HCT116 (cell line): ENCODE measurements at regions of chr16 and their contacts with region 1.

Region 1: DNA sequence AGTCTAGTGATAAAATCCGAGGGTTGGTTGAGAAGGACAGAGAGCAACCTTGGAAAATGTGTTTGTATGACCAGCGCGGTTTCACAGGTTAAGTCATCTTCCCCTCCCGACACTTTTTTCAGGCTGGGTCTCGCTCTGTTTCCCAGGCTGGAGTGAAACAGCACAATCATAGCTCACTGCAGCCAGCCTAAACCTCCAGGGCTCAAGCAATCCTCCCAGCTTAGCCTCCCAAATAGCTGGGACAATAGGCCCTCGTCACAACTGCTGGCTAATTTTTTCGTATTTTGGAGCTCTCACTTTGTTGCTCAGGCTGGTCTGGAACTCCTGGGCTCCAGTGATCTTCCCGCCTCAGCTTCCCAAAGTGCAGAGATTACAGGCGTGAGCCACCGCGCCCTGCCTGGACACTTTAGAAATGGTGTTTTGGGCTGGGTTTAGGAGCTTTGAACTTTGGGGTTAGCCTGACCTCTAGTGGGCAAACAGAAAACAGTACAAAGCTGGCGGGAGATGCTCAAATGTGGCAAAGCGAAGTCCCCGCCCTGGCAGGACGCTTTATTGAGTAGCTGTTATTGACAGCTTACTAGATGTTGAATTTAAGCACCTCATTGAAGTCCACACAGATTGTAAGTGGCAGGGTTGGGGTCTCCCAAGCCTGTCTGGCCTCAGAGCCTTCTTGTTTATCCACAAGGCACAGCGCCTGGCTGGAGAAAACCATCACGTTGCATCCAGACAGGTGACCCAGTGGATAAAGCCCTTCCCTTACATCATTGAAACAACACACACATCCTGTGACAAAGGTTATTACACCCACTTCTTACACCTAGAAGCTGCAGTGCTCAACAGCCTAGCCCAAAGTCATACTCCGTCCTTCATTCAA is 34.7 kb upstream of the RBBP6 start:
- DNase-seq: peak; percentile 74
- ATAC-seq: peak; percentile 98
- H3K4me3 ChIP-seq: no peak overlapping the region; a peak in 2 of 4 replicates
- H3K27ac ChIP-seq: no peak overlapping the region
- H3K4me1 ChIP-seq: peaks cover 0 to 9% of the 10 kb centered on the region in 2 experiments; a peak in 3 of 4 replicates
- H3K27me3 ChIP-seq: no peaks in the 10 kb centered on the region
- CTCF ChIP-seq: peak; percentile 76 to 82 (median 81)
- POLR2A ChIP-seq: no peak
- RAD21 ChIP-seq: peak; percentile 86

Region 2: DNA sequence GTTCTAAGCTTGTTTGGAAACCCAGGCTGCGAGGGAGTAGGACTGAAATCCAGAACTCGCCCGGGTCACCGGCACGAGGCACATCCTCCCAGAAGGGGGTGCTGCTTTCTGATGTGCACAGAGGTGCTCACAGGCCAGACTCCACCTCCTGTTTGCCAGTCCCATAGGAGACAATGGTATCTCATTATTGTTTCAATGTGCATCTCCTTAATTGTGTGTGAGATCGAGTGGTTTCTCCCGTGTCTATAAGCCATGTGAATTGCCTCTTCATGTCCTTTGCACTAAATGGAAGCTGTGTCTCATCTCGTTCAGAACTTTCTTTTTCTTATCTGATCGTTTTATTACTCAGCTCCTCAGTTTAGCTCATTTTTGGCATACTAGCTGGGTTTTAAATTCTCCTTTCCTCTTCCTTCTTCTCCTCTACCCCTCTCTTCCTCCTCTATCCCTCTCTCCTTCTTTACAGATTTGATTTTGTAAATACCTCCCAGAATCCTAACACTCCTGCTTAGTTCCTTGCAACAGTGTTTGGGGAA is 701.1 kb before region 1 on chr16:
- CTCF ChIA-PET with region 1: interaction called, 6 read pairs
- POLR2A ChIA-PET with region 1: no interaction called
- RAD21 ChIA-PET with region 1: no interaction called
- intact Hi-C with region 1: loop called (anchors 5 kb)
- DNase-seq: peak; percentile 57
- ATAC-seq: peak; percentile 95
- H3K4me3 ChIP-seq: no peak overlapping the region
- H3K27ac ChIP-seq: no peak overlapping the region
- H3K4me1 ChIP-seq: peaks cover 0 to 13% of the 10 kb centered on the region in 2 experiments; a peak in 2 of 4 replicates
- H3K27me3 ChIP-seq: no peaks in the 10 kb centered on the region
- CTCF ChIP-seq: peak; percentile 58 to 77 (median 67); a peak in 5 of 6 replicates
- POLR2A ChIP-seq: no peak
- RAD21 ChIP-seq: peak; percentile 58

Region 3: GRCh38 chr16:24041826-24042631 is 462.7 kb before region 1 on chr16:
- CTCF ChIA-PET with region 1: interaction called, 101 read pairs
- POLR2A ChIA-PET with region 1: interaction called, 4 read pairs
- RAD21 ChIA-PET with region 1: interaction called, 12 to 15 read pairs
- intact Hi-C with region 1: loop called (anchors 1 kb)
- DNase-seq: peak; percentile 49
- ATAC-seq: peak; percentile 88
- H3K4me3 ChIP-seq: no peak overlapping the region
- H3K27ac ChIP-seq: no peak overlapping the region
- H3K4me1 ChIP-seq: no peaks in the 10 kb centered on the region
- H3K27me3 ChIP-seq: no peaks in the 10 kb centered on the region
- CTCF ChIP-seq: peak; percentile 77 to 84 (median 82); a peak in 5 of 6 replicates
- POLR2A ChIP-seq: no peak
- RAD21 ChIP-seq: peak; percentile 85

Region 4: DNA sequence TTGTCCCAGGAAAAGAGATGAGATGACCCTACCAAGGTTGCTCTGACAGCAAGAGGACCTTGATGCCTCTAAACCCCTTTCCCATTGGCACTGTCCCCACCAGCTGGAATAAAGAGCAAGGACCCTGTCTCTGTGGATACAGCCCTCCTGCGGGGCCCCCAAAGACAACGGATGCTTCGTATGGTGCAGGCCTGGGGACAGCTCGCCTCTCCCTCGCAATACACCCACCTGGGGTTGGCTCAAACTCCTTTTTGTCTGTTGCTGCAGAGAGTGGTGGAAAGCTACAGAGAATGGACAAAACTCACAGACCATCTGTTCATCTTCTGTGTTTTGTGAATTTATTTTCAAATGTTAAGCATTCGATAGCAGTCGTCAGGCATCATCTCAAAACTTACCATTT is 276.2 kb before region 1 on chr16:
- CTCF ChIA-PET with region 1: no interaction called
- POLR2A ChIA-PET with region 1: no interaction called
- RAD21 ChIA-PET with region 1: no interaction called
- intact Hi-C with region 1: no loop called
- DNase-seq: no peak
- ATAC-seq: no peak
- H3K4me3 ChIP-seq: no peak overlapping the region
- H3K27ac ChIP-seq: no peak overlapping the region
- H3K4me1 ChIP-seq: no peaks in the 10 kb centered on the region
- H3K27me3 ChIP-seq: peaks cover 24% of the 10 kb centered on the region; the same call in 1 of the 2 replicates
- CTCF ChIP-seq: no peak
- POLR2A ChIP-seq: no peak
- RAD21 ChIP-seq: no peak

Region 5: DNA sequence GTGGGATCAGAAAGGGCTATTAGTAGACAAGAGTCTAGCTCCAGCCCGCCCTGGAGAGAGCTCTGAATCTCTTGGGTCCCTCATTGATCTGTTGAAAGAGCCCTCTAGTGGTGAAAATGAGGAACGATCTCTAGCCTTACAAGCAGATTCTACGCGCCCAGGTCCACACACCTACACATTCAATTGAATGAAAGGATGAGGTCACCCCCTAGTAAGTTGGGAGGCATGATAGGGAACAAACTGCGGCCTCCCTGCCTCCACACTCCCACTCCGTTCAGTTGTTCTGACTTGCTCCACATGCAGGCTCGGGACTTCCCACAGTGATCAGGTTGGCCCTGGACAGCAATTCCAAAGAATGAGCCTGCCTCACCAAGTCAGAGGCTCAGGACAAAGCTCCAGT is 251.5 kb before region 1 on chr16:
- CTCF ChIA-PET with region 1: interaction called, 13 read pairs
- POLR2A ChIA-PET with region 1: no interaction called
- RAD21 ChIA-PET with region 1: interaction called in 1 of 2 experiments, 3 read pairs
- intact Hi-C with region 1: loop called (anchors 2 kb)
- DNase-seq: peak; percentile 34
- ATAC-seq: peak; percentile 88
- H3K4me3 ChIP-seq: no peak overlapping the region
- H3K27ac ChIP-seq: no peak overlapping the region
- H3K4me1 ChIP-seq: no peaks in the 10 kb centered on the region
- H3K27me3 ChIP-seq: 0 out of 2 replicates have a peak, but pooled peaks cover 8% of the 10 kb centered on the region
- CTCF ChIP-seq: peak; percentile 42 to 73 (median 64); a peak in 5 of 6 replicates
- POLR2A ChIP-seq: no peak
- RAD21 ChIP-seq: peak; percentile 54

Region 6: GRCh38 chr16:24409049-24409448 is 95.7 kb before region 1 on chr16:
- CTCF ChIA-PET with region 1: interaction called, 11 read pairs
- POLR2A ChIA-PET with region 1: no interaction called
- RAD21 ChIA-PET with region 1: no interaction called
- intact Hi-C with region 1: loop called (anchors 1 kb)
- DNase-seq: peak; percentile 7
- ATAC-seq: peak; percentile 86
- H3K4me3 ChIP-seq: no peak overlapping the region
- H3K27ac ChIP-seq: no peak overlapping the region
- H3K4me1 ChIP-seq: no peaks in the 10 kb centered on the region
- H3K27me3 ChIP-seq: no peaks in the 10 kb centered on the region; the same call in 1 of the 2 replicates
- CTCF ChIP-seq: peak; percentile 34 to 65 (median 47); a peak in 4 of 6 replicates
- POLR2A ChIP-seq: no peak
- RAD21 ChIP-seq: peak; percentile 34; the same call in 1 of the 2 replicates

Region 7: GRCh38 chr16:24478401-24478800 is 26.3 kb before region 1 on chr16:
- CTCF ChIA-PET with region 1: no interaction called
- POLR2A ChIA-PET with region 1: no interaction called
- RAD21 ChIA-PET with region 1: no interaction called
- intact Hi-C with region 1: no loop called
- DNase-seq: no peak
- ATAC-seq: no peak
- H3K4me3 ChIP-seq: no peak overlapping the region
- H3K27ac ChIP-seq: no peak overlapping the region
- H3K4me1 ChIP-seq: no peaks in the 10 kb centered on the region
- H3K27me3 ChIP-seq: no peaks in the 10 kb centered on the region
- CTCF ChIP-seq: no peak
- POLR2A ChIP-seq: no peak
- RAD21 ChIP-seq: no peak

Region 8: DNA sequence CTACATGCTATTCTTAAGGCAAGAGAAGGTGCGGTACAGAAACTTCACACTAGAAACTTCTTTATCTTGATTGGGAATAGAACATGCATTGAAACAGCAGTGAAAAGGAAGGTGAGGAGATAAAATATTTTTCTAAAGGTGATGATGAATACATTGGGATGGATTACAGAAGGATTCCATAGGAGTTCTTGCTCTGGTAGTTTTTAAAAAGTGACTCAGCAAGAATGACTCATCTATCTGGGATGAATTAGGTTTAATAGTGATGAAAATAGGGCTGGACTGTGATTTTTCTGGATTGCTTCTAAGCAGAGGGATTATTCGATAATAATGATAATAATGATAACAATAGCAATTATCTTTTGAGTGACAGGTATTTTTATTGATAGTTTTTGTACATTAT is 1121.5 kb after region 1 on chr16:
- CTCF ChIA-PET with region 1: no interaction called
- POLR2A ChIA-PET with region 1: no interaction called
- RAD21 ChIA-PET with region 1: no interaction called
- intact Hi-C with region 1: no loop called
- DNase-seq: no peak
- ATAC-seq: no peak
- H3K4me3 ChIP-seq: no peak overlapping the region
- H3K27ac ChIP-seq: no peak overlapping the region
- H3K4me1 ChIP-seq: peaks cover 0 to 13% of the 10 kb centered on the region in 2 experiments; a peak in 2 of 4 replicates
- H3K27me3 ChIP-seq: peaks cover 6% of the 10 kb centered on the region; the same call in 1 of the 2 replicates
- CTCF ChIP-seq: no peak
- POLR2A ChIP-seq: no peak
- RAD21 ChIP-seq: no peak